ENCODE measurements at regions of chr15 and their contacts with region 1.

Region 1: GRCh38 chr15:40274350-40275274 is 8.3 kb downstream of the ANKRD63 start:
- DNase-seq: peak; percentile 92
- H3K4me3 Mint-ChIP-seq: no peak overlapping the region
- H3K27ac Mint-ChIP-seq: no peak overlapping the region
- H3K4me1 Mint-ChIP-seq: peaks cover 2% of the 10 kb centered on the region
- H3K27me3 Mint-ChIP-seq: peaks cover 23% of the 10 kb centered on the region

Region 2: DNA sequence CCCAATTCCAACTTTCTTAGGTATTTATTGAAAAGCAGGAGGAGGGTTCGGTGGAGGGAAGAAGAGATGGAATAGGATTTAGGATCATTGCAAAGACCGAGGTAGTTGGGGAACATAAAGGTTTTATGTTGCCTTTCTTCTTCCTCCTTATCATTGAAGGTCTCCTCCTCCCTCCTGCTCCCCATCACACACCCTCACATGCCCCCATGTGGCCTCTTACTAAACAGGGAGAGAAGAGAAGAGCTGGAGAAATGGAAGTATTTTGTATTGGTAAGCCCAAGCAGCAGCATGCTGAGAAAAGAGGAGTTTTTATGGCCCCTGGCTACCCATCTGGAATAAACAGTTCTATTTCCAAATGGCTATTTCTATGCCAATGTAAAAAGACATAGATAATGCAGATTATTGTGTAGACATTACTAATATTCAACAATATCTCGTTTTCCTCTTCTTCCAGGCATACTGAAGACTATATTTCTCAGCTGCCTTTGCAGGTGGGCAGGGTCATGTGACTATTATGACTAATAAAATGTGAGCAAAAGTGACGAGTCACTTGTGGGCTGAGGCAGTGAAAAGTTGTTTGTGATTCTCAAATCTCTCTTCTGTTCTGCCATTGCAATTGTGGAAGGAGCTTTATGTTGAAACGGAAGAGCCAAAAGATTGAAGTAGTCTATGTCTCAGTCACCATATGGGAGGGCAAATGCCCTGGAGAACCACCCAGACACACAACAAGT is 349.3 kb before region 1 on chr15:
- CTCF ChIA-PET with region 1: no interaction called
- intact Hi-C with region 1: no loop called
- DNase-seq: peak; percentile 43
- H3K4me3 Mint-ChIP-seq: no peak overlapping the region
- H3K27ac Mint-ChIP-seq: peak overlapping the region; percentile 13
- H3K4me1 Mint-ChIP-seq: peaks cover 15% of the 10 kb centered on the region
- H3K27me3 Mint-ChIP-seq: no peaks in the 10 kb centered on the region

Region 3: DNA sequence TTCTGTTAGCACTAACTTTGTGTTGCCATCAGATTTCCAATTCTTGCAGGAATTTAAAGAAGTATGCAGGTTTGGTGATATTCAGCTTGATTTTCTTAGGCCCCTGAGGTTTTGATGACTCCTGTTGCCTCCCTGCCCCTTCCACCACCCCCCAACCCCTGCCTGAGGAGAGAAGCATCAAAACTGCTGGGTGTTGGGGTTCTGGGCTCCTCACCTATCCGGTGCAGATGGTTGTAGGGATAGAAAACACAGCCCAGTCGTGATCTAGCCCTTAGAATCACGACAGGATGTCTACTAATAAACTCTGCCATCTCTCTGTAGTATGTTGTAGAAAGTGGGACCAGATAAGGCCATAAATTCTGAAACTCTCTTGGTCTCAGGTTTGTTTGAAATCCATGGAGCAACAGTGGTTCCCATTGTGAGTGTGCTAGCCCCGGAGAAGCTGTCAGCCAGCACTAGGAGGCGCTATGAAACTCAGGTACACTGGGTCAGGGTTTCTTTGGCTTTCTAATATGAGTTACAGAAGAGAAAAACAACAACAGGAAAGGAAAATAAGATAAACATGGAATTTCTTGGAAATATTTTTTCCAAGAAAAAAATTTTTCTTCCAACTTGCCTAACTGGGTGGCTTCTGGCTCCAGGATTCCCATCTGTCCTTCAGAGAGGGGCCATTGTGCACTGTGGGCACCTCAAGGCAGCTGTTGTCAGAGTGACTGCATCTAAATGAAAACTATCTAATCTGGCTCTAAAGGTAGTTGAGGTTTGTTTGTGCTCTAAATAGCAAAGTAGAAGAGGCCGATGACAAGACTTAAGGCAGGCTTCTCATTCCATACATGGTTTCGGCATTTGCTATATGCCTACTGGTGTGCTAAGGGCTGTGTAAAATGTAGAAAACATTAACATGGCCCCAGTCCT is 244.4 kb before region 1 on chr15:
- CTCF ChIA-PET with region 1: interaction called, 19 read pairs
- intact Hi-C with region 1: loop called (anchors 1 kb)
- DNase-seq: peak; percentile 59
- H3K4me3 Mint-ChIP-seq: no peak overlapping the region
- H3K27ac Mint-ChIP-seq: no peak overlapping the region
- H3K4me1 Mint-ChIP-seq: peaks cover 5% of the 10 kb centered on the region
- H3K27me3 Mint-ChIP-seq: no peaks in the 10 kb centered on the region

Region 4: DNA sequence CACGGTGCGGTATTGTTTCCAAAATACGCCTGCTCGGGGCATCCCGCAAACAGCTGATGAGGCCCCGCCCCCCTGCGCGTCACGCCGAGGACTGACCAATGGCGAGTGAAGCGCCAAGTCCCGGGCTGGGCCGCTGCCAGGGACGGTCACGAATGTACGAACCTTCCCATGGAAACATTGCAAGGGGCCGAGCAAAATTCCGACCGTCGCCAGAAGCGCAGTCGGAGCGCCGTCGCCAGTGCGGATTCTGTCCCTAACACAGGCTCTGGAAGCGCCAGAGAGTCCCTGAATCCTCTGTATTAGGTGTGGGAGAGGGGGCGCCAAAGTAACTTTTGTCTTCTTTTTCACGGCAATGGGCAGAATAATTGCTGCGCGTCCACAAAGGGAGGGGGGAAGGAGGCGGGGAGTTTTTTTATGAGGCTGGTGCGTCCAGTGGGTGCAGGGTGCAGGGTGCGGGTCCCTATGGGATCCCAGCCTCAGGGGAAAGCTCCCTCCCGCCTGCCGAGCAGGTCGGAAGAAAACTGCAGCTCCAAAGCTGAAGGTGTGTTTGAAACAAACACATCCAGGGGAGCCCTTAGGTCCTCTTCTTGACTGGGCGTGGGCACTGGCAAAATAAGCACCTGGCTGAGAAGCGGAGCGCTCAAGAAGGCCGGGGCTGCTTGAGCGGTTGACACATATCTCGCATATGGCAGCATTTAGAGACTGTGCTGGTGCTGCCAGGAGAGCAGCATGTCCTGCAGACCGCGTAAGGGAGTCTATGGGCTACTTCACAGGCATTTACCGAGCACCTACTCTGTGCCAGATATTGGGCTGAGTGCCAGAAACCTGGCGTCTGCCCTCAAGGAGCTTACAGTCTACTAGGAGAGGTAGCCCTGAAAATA is 165.5 kb before region 1 on chr15 and contains the start of gene BMF:
- CTCF ChIA-PET with region 1: interaction called, 15 read pairs
- intact Hi-C with region 1: loop called (anchors 2 kb)
- DNase-seq: peak; percentile 98
- H3K4me3 Mint-ChIP-seq: peak within 1 kb of the TSS; percentile 84
- H3K27ac Mint-ChIP-seq: peak within 1 kb of the TSS; percentile 31
- H3K4me1 Mint-ChIP-seq: peaks cover 40% of the 10 kb centered on the region
- H3K27me3 Mint-ChIP-seq: no peaks in the 10 kb centered on the region
- total RNA-seq, gene BMF: 9.4 to 10.3 TPM

Region 5: DNA sequence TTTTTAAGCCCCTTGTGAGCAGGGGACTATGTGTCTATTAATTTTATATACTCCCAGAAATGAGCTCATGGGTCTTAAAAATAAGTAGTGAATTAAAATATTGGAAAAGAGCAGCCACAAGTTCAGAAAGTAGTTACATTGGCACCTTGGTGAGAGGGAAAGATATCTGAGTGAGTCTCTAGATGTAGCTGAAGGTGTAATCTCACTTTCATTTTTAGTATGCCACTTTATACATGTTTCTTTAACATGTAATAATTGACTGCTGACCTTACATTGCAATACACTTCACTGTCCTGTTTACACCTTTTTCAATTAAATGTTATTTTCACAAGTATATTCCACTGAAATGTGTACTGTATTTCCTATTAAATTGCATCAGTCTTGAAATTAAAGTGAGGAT is 47.9 kb before region 1 on chr15:
- CTCF ChIA-PET with region 1: interaction called, 21 read pairs
- intact Hi-C with region 1: no loop called
- DNase-seq: no peak
- H3K4me3 Mint-ChIP-seq: no peak overlapping the region
- H3K27ac Mint-ChIP-seq: no peak overlapping the region
- H3K4me1 Mint-ChIP-seq: peaks cover 7% of the 10 kb centered on the region
- H3K27me3 Mint-ChIP-seq: no peaks in the 10 kb centered on the region

Region 6: GRCh38 chr15:40301467-40302179 is 27.0 kb after region 1 on chr15:
- CTCF ChIA-PET with region 1: interaction called, 365 read pairs
- intact Hi-C with region 1: no loop called
- DNase-seq: no peak
- H3K4me3 Mint-ChIP-seq: no peak overlapping the region
- H3K27ac Mint-ChIP-seq: no peak overlapping the region
- H3K4me1 Mint-ChIP-seq: peaks cover 13% of the 10 kb centered on the region
- H3K27me3 Mint-ChIP-seq: no peaks in the 10 kb centered on the region

Region 7: GRCh38 chr15:40338041-40338657 is 63.5 kb after region 1 on chr15:
- CTCF ChIA-PET with region 1: interaction called, 246 read pairs
- intact Hi-C with region 1: loop called (anchors 1 kb)
- DNase-seq: peak; percentile 82
- H3K4me3 Mint-ChIP-seq: no peak overlapping the region
- H3K27ac Mint-ChIP-seq: no peak overlapping the region
- H3K4me1 Mint-ChIP-seq: peaks cover 17% of the 10 kb centered on the region
- H3K27me3 Mint-ChIP-seq: no peaks in the 10 kb centered on the region

Region 8: GRCh38 chr15:40706121-40706520 is 431.5 kb after region 1 on chr15:
- CTCF ChIA-PET with region 1: no interaction called
- intact Hi-C with region 1: no loop called
- DNase-seq: no peak
- H3K4me3 Mint-ChIP-seq: no peak overlapping the region
- H3K27ac Mint-ChIP-seq: no peak overlapping the region
- H3K4me1 Mint-ChIP-seq: no peaks in the 10 kb centered on the region
- H3K27me3 Mint-ChIP-seq: no peaks in the 10 kb centered on the region

Measured in activated naive CD4-positive, alpha-beta T cell treated with anti-CD3 and anti-CD28 coated beads for 36 hours (primary cell).